ENCODE measurements at regions of chr2 and their contacts with region 1.

Region 1: GRCh38 chr2:9555297-9556141 is at the start of gene ADAM17:
- DNase-seq: peak; percentile 92
- H3K4me3 Mint-ChIP-seq: peak within 1 kb of the TSS; percentile 97
- H3K27ac Mint-ChIP-seq: peak within 1 kb of the TSS; percentile 94
- H3K4me1 Mint-ChIP-seq: peaks cover 58% of the 10 kb centered on the region
- H3K27me3 Mint-ChIP-seq: no peaks in the 10 kb centered on the region
- total RNA-seq, gene ADAM17: 28.9 to 31.0 TPM

Region 2: GRCh38 chr2:9430316-9431293 is 124.9 kb before region 1 on chr2:
- CTCF ChIA-PET with region 1: no interaction called
- POLR2A ChIA-PET with region 1: no interaction called
- DNase-seq: no peak
- H3K4me3 Mint-ChIP-seq: no peak overlapping the region
- H3K27ac Mint-ChIP-seq: peak overlapping the region; percentile 78
- H3K4me1 Mint-ChIP-seq: peaks cover 18% of the 10 kb centered on the region
- H3K27me3 Mint-ChIP-seq: no peaks in the 10 kb centered on the region

Region 3: GRCh38 chr2:9565436-9566153 is 10.1 kb after region 1 on chr2:
- CTCF ChIA-PET with region 1: interaction called, 3 read pairs
- POLR2A ChIA-PET with region 1: interaction called, 14 read pairs
- DNase-seq: no peak
- H3K4me3 Mint-ChIP-seq: no peak overlapping the region
- H3K27ac Mint-ChIP-seq: no peak overlapping the region
- H3K4me1 Mint-ChIP-seq: peaks cover 3% of the 10 kb centered on the region
- H3K27me3 Mint-ChIP-seq: no peaks in the 10 kb centered on the region

Region 4: GRCh38 chr2:9613291-9613690 is 57.8 kb after region 1 on chr2:
- CTCF ChIA-PET with region 1: interaction called, 4 read pairs
- POLR2A ChIA-PET with region 1: interaction called, 22 read pairs
- DNase-seq: no peak
- H3K4me3 Mint-ChIP-seq: no peak overlapping the region
- H3K27ac Mint-ChIP-seq: no peak overlapping the region
- H3K4me1 Mint-ChIP-seq: peaks cover 89% of the 10 kb centered on the region
- H3K27me3 Mint-ChIP-seq: no peaks in the 10 kb centered on the region

Region 5: GRCh38 chr2:9663008-9663879 is 107.7 kb after region 1 on chr2:
- CTCF ChIA-PET with region 1: no interaction called
- POLR2A ChIA-PET with region 1: interaction called, 10 read pairs
- DNase-seq: no peak
- H3K4me3 Mint-ChIP-seq: no peak overlapping the region
- H3K27ac Mint-ChIP-seq: peak overlapping the region; percentile 74
- H3K4me1 Mint-ChIP-seq: peaks cover 32% of the 10 kb centered on the region
- H3K27me3 Mint-ChIP-seq: peaks cover 3% of the 10 kb centered on the region

Region 6: DNA sequence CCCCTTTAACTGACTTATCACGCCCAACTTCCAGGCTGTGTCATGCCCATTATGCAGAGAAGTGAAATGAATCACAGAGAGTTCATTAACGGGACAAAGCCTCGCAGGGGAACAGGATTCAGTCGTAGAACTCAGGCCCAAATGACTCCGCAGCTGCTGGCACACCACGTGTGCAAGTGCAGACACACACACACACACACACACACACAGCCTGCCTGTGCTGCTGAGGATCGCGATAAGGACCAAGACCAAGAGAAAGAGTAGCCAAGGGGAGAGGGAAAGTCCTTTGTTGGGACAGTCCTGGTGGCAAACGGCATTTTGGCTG is 197.7 kb after region 1 on chr2:
- CTCF ChIA-PET with region 1: interaction called, 7 read pairs
- POLR2A ChIA-PET with region 1: interaction called, 39 read pairs
- DNase-seq: peak; percentile 80
- H3K4me3 Mint-ChIP-seq: peak overlapping the region; percentile 95
- H3K27ac Mint-ChIP-seq: peak overlapping the region; percentile 100
- H3K4me1 Mint-ChIP-seq: peaks cover 76% of the 10 kb centered on the region
- H3K27me3 Mint-ChIP-seq: peaks cover 8% of the 10 kb centered on the region

Region 7: GRCh38 chr2:9843229-9844035 is 287.9 kb after region 1 on chr2 and contains the start of gene TAF1B:
- CTCF ChIA-PET with region 1: interaction called, 4 read pairs
- POLR2A ChIA-PET with region 1: interaction called, 23 read pairs
- DNase-seq: peak; percentile 91
- H3K4me3 Mint-ChIP-seq: peak within 1 kb of the TSS; percentile 87
- H3K27ac Mint-ChIP-seq: peak within 1 kb of the TSS; percentile 87
- H3K4me1 Mint-ChIP-seq: peaks cover 49% of the 10 kb centered on the region
- H3K27me3 Mint-ChIP-seq: no peaks in the 10 kb centered on the region
- total RNA-seq, gene TAF1B: 49.4 to 54.7 TPM